Natural killer cell (primary cell): ENCODE measurements at regions of chr19 and their contacts with region 1.

Region 1: GRCh38 chr19:17718947-17719711 is at the start of gene MAP1S:
- DNase-seq: peak; percentile 66 to 73
- ATAC-seq: peak; percentile 84 to 95 (median 93)
- H3K4me3 ChIP-seq: peak within 1 kb of the TSS; percentile 93
- H3K4me3 Mint-ChIP-seq: peak within 1 kb of the TSS; percentile 88
- H3K27ac ChIP-seq: peak within 1 kb of the TSS; percentile 38
- H3K27ac Mint-ChIP-seq: peak within 1 kb of the TSS; percentile 68 to 86
- H3K4me1 ChIP-seq: peaks cover 40% of the 10 kb centered on the region
- H3K4me1 Mint-ChIP-seq: peaks cover 25 to 42% of the 10 kb centered on the region in 2 donors
- H3K27me3 ChIP-seq: no peaks in the 10 kb centered on the region
- H3K27me3 Mint-ChIP-seq: peaks cover 0 to 3% of the 10 kb centered on the region in 2 donors
- CTCF ChIP-seq: no peak
- total RNA-seq, gene MAP1S: 41.0 to 59.4 (median 45.8) TPM

Region 2: GRCh38 chr19:17555480-17555928 is 163.6 kb before region 1 on chr19 and contains the start of gene COLGALT1:
- intact Hi-C with region 1: loop called (anchors 1 kb)
- DNase-seq: peak; percentile 97 to 99
- ATAC-seq: peak; percentile 99 to 100 (median 99)
- H3K4me3 ChIP-seq: peak within 1 kb of the TSS; percentile 57
- H3K4me3 Mint-ChIP-seq: peak within 1 kb of the TSS; percentile 86
- H3K27ac ChIP-seq: peak within 1 kb of the TSS; percentile 32
- H3K27ac Mint-ChIP-seq: peak within 1 kb of the TSS; percentile 61 to 79
- H3K4me1 ChIP-seq: peaks cover 18% of the 10 kb centered on the region
- H3K4me1 Mint-ChIP-seq: peaks cover 16 to 20% of the 10 kb centered on the region in 2 donors
- H3K27me3 ChIP-seq: no peaks in the 10 kb centered on the region
- H3K27me3 Mint-ChIP-seq: no peaks in the 10 kb centered on the region
- CTCF ChIP-seq: no peak
- total RNA-seq, gene COLGALT1: 39.0 to 55.4 (median 43.7) TPM

Region 3: DNA sequence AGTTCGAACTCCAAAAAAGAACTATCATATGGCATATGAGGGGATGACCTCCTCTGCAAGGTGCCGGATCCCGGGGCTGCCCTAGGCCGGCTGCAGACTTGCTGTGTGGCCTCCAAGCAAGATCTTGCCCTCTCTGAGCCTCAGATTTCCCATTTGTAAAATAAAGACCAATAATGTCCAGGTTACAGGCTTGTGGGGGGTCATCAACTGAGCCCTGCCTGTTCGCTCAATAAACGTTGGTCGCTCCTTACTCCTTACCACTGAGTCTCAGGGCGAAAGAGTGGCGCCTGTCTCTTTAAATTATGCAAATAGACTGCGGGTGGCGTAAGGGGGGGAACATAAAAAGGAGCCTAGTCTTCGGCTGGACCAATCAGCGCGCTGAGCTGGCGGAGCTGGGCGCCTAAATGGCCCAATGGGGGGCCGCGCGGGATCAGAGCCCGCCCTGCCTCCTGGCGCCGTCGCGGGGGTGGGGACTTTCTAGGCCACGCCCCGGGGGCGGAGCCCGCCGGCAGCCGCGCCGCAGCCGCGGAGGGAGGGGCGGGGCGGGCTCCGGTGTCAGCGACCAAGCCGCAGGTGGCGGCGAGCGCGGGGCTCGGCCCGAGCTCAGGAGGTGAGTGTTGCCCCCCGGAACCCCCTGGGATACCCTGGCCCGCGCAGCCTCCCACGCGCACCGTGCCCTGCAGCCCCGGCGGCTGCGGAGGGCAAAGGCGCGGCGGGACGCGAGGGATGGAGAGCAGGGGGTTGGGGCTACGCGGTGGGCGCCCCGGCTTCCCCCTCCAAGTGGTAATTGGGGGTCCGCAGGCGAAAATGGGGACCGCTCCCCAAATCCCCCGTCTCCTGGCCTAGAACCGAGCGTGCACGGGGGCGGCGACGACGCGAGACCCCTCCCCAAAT is 28.3 kb after region 1 on chr19:
- intact Hi-C with region 1: loop called (anchors 1 kb)
- DNase-seq: peak; percentile 95 to 98
- ATAC-seq: peak; percentile 87 to 98 (median 90)
- H3K4me3 ChIP-seq: peak overlapping the region; percentile 58
- H3K4me3 Mint-ChIP-seq: peak overlapping the region; percentile 82
- H3K27ac ChIP-seq: peak overlapping the region; percentile 35
- H3K27ac Mint-ChIP-seq: peak overlapping the region; percentile 69 to 95
- H3K4me1 ChIP-seq: peaks cover 52% of the 10 kb centered on the region
- H3K4me1 Mint-ChIP-seq: peaks cover 30 to 48% of the 10 kb centered on the region in 2 donors
- H3K27me3 ChIP-seq: no peaks in the 10 kb centered on the region
- H3K27me3 Mint-ChIP-seq: no peaks in the 10 kb centered on the region
- CTCF ChIP-seq: no peak